Lower leg skin (tissue), 4 donors: ENCODE measurements at regions of chr6 and their contacts with region 1.

Region 1: DNA sequence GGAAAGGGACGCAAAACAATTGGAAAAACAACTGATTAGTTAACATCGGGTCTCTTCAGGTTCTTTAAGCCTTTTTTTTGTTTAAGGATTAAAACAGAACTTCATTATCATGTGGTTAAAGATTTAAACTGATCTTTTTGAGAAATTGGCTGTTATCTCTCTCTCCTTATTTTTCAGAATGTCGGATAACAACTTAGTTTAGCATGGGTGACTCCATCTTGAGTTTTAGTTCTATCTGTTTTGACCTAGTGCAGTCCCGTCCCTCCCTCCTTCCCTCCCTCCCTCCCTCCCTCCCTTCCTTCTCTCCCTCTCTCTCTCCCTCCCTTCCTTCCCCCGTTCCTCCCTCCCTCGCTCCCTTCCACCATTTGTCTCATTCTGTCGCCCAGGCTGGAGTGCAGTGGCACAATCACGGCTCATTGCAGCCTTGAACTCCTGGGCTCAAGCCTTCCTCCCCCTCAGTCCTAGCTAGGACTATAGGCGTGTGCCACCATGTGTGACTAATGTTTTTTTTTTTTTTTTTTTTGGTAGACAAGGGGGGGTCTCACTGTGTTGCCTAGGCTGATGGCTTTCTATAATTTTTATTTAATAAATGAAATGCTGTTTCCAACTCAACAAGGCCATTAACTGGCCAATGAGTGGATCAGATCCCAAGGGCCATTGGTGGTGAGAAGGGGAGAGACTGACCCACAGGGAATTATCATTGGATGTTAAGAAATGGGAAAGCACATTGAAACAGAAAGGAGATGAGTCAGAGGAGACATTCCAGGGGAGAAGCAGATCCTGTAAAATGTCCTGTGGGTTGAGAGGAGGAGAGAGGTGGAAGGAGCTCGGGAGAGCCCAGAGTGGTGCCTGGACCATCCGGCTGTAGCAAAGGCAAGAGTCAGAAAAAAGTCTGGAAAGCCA is 13.6 kb downstream of the BAK1 start:
- DNase-seq: no peak
- H3K4me3 ChIP-seq: no peak overlapping the region
- CTCF ChIP-seq: no peak
- POLR2A ChIP-seq: no peak

Region 2: DNA sequence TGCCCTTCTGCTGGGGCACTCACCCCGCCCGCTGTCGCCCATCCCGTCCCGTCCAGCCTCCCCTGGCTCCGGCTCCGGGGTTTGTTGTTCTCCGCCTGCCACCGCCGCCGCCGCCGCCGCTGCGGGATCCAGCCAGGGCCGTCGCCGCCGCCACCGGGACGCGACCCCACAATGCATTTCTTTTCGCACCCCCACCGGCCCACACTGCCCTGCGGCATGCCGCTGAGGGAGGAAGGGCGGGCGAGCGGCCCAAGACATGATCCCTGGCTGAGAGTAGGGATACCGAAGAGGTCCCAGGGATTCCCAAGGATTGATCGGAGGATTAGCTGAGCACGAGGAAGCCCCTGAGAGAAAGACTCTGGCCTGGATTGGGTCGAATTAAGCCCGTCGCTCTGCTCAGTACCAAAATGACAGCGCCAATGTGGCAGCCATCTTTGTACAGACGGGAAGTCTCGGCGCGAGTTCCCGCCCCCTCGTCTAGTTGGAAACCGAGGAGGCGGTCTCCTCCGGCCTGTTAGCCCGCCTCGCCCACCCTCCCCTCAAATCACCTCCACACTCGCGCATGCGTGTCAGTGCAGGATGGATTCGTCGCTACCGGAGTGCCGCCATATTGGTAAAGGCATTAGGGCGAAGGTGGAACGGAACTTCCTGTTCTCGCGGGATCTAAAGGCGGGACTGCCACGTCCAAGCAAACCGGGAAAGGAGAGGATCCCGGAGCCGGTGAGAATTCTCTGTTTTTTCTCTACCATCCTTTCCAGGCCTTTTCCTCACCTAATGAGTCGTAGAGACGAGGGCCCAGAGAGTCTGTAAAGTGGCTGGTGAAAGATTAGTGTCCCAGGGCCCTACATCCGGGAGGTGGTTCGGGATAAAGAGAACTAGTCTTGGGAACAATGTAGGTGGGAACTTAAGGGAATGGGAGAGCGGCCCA is 365.9 kb before region 1 on chr6 and contains the starts of genes RXRB and SLC39A7:
- intact Hi-C with region 1: no loop called
- DNase-seq: peak; percentile 99 to 100
- H3K4me3 ChIP-seq: peak within 1 kb of the TSS; percentile 95
- CTCF ChIP-seq: peak in 1 of 3 donors; percentile 59
- POLR2A ChIP-seq: no peak
- total RNA-seq, gene RXRB: 17.8 to 27.3 (median 24.9) TPM
- total RNA-seq, gene SLC39A7: 35.4 to 52.7 (median 39.1) TPM

Region 3: GRCh38 chr6:33430991-33431879 is 135.2 kb before region 1 on chr6:
- intact Hi-C with region 1: loop called (anchors 10 kb)
- DNase-seq: no peak
- H3K4me3 ChIP-seq: no peak overlapping the region
- CTCF ChIP-seq: no peak
- POLR2A ChIP-seq: no peak